ENCODE measurements at regions of chr1 and their contacts with region 1.

Region 1: DNA sequence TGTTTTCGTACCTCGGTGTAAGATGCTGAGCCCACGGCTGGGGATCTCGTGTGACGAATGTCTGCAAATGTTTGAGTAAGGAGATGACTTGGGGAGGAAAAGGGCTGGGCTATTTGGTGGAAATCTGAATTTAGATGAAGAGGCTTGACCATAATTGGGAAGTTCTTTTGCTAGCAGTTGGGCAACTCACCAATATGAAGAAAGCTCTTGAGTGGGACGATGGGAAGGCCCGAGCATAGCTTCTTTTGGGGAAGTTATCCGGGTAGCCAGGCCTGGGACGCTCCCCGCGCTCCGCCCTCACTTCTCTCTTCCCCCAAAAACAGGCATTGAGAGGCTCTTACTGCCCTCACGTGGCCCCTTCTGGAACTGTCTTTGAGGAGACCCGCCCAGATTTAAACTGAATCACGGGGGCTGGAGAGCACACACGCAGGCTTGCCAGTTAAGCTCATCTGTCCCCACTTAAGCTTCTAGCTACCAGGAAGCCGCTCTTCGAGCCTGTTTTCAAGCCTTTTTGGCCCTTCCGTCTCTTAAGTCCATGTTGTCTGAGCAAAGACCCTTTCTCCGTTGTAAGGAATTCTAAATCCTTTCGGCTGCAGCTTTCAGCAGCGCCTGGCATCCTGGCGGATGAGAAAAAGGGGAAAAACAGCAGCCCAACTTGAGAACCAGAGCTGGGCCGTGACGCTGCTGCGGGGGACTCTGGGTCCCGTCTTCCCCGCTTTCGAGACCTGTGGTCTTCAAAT is 93.1 kb downstream of the NID1 start:
- DNase-seq: peak; percentile 88
- ATAC-seq: peak; percentile 97 to 99
- H3K4me3 ChIP-seq: peak overlapping the region; percentile 25; the same call in 2 of the 3 replicates
- H3K27ac ChIP-seq: peak overlapping the region; percentile 69 to 82
- H3K4me1 ChIP-seq: peaks cover 13% of the 10 kb centered on the region
- CTCF ChIP-seq: peak; percentile 91
- EP300 ChIP-seq: no peak
- POLR2A ChIP-seq: no peak
- RAD21 ChIP-seq: peak; percentile 96 to 98

Region 2: DNA sequence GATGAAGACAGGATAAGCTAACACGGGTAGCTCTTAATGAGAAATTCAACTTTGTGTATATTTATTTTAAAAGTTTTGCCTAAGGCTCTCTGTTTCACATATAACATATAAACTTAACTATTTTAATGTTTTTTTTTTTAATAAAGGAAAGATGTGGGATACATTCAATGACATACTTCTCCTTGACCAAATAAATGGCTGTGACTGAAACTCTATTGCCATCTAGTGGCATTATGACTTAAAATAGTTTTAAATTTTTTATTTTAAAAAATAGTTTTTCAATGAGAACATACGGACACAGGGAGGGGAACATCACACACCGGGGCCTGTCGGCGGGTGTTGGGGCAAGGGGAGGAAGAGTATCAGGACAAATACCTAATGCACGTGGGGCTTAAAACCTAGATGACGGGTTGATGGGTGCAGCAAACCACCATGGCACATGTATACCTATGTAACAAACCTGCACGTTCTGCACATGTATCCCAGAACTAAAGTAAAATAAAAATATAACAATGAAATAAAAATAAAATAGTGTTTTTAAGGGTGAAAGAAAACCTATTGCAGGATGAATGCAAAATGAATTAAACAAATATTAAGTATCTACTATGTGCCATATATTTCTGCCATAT is 188.5 kb before region 1 on chr1:
- CTCF ChIA-PET with region 1: interaction called, 18 read pairs
- POLR2A ChIA-PET with region 1: no interaction called
- DNase-seq: peak; percentile 15 to 50
- ATAC-seq: peak in 1 of 2 experiments; percentile 42; a peak in 2 of 6 replicates
- H3K4me3 ChIP-seq: no peak overlapping the region
- H3K27ac ChIP-seq: peak overlapping the region in 1 of 2 experiments; percentile 55; a peak in 1 of 6 replicates
- H3K4me1 ChIP-seq: 0 out of 3 replicates have a peak, but pooled peaks cover 5% of the 10 kb centered on the region
- CTCF ChIP-seq: peak; percentile 77
- EP300 ChIP-seq: no peak
- POLR2A ChIP-seq: no peak
- RAD21 ChIP-seq: peak; percentile 81 to 90

Region 3: GRCh38 chr1:235857756-235858155 is 114.0 kb before region 1 on chr1:
- CTCF ChIA-PET with region 1: interaction called, 160 read pairs
- POLR2A ChIA-PET with region 1: no interaction called
- DNase-seq: no peak
- ATAC-seq: no peak
- H3K4me3 ChIP-seq: no peak overlapping the region
- H3K27ac ChIP-seq: no peak overlapping the region
- H3K4me1 ChIP-seq: peaks cover 11% of the 10 kb centered on the region; the same call in 2 of the 3 replicates
- CTCF ChIP-seq: no peak
- EP300 ChIP-seq: no peak
- POLR2A ChIP-seq: no peak
- RAD21 ChIP-seq: no peak

Region 4: GRCh38 chr1:235910357-235911299 is 61.1 kb before region 1 on chr1:
- CTCF ChIA-PET with region 1: interaction called, 35 read pairs
- POLR2A ChIA-PET with region 1: interaction called, 6 read pairs
- DNase-seq: peak; percentile 90 to 94
- ATAC-seq: peak; percentile 95 to 96
- H3K4me3 ChIP-seq: no peak overlapping the region
- H3K27ac ChIP-seq: peak overlapping the region; percentile 77 to 90
- H3K4me1 ChIP-seq: peaks cover 56% of the 10 kb centered on the region
- CTCF ChIP-seq: no peak
- EP300 ChIP-seq: 0 out of 5 replicates have a peak, but pooled peaks of 1 of the 2 experiments have one; percentile 58
- POLR2A ChIP-seq: no peak
- RAD21 ChIP-seq: peak in 1 of 2 experiments; percentile 21; a peak in 1 of 5 replicates

Region 5: DNA sequence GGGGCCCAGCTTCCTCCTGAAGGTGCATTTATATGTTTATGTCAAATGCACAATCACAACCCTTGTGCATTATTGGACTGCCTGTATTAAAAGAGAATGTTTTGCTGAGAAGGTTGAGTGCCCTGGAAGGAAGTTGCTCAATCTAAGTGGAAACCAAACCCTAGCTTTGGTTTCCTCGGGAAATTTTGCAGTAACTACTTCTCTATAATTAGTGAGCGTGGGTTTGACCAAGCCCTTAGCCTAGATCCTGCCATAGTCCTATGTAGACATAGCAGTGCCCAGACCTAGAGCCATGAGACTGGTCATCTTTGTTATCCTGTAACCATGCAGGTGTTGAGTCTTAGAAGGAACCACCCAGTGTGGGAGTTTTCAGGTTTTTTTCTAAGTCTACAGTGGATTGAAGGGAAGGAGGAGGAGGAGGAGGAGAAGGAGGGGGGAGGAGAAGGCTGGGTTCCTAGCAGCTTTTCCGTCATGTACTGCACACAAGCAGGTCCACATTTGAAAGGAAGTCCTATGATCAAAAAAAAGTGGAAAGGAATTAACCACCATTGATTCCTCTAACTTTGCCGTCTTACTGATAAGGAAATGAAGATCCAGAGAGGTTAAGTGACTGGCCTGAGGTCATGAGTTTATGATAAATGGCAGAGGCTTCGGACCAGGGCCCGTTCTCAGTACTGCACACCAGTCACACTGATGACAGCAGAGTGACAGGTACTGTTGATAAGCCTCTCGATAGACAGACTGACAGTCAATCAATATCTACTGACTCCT is 32.8 kb before region 1 on chr1:
- CTCF ChIA-PET with region 1: interaction called, 25 read pairs
- POLR2A ChIA-PET with region 1: no interaction called
- DNase-seq: no peak
- ATAC-seq: no peak
- H3K4me3 ChIP-seq: no peak overlapping the region
- H3K27ac ChIP-seq: no peak overlapping the region
- H3K4me1 ChIP-seq: no peaks in the 10 kb centered on the region
- CTCF ChIP-seq: no peak
- EP300 ChIP-seq: no peak
- POLR2A ChIP-seq: no peak
- RAD21 ChIP-seq: no peak

Region 6: DNA sequence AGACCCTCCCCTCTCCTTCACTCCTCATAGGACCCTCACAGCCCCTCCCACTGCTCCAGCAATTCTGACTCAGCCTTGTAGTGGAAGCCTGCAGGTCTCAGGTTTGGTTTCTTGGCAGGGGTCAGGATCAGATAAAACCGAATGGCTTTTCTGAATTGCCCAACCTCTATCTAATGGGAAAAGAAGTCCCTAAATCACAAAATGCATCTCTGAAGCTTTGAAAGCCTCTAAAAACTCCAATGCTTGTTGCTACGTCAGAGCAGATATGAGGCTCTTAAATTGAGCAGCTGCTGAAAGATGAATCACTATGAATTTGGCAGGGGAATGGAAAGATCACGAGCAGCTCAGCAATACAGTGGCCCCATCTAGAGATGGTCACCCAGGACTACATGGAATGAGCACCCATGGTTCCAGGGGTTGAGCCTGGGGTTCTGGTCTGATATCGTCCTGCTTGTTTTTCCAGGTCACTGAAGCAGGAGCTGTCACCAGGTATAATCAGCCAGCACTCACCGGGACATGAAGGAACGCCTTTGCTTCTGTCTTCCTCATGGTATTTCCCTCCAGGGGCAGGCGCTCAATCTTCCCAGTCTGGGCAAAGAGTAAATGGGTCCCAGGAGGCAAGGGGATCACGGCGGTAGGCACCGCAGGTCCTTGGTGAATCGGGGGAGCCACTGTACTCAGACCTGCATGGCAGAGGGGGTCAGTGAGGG is 18.8 kb after region 1 on chr1:
- CTCF ChIA-PET with region 1: interaction called, 28 read pairs
- POLR2A ChIA-PET with region 1: no interaction called
- DNase-seq: no peak
- ATAC-seq: no peak
- H3K4me3 ChIP-seq: no peak overlapping the region
- H3K27ac ChIP-seq: no peak overlapping the region
- H3K4me1 ChIP-seq: no peaks in the 10 kb centered on the region
- CTCF ChIP-seq: no peak
- EP300 ChIP-seq: no peak
- POLR2A ChIP-seq: no peak
- RAD21 ChIP-seq: no peak

Measured in A549 (cell line).